PC-3 (cell line): ENCODE measurements at regions of chr12 and their contacts with region 1.

Region 1: DNA sequence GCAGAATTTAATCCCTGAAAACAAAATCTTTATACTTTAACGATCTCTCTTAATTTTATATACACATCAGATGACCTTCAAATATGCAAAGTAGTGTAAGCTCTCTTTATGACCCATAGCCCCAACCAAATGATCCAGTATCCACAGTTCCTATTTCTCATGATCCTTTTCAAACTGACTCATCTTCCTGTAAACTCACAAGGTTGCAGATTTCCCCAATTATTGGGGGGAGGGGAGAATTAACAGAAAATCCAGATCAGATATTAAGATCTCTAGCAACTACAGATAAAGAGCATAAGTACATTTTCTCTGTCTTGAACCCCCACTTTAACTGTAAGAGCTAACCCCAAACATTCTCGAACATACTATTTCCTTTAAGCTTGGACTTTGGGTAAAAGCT is 12.5 kb downstream of the GNS start:
- DNase-seq: peak; percentile 47
- ATAC-seq: peak; percentile 61
- H3K4me3 ChIP-seq: no peak overlapping the region
- H3K27ac ChIP-seq: peak overlapping the region; percentile 42
- H3K4me1 ChIP-seq: peaks cover 28% of the 10 kb centered on the region
- H3K27me3 ChIP-seq: no peaks in the 10 kb centered on the region
- CTCF ChIP-seq: no peak

Region 2: DNA sequence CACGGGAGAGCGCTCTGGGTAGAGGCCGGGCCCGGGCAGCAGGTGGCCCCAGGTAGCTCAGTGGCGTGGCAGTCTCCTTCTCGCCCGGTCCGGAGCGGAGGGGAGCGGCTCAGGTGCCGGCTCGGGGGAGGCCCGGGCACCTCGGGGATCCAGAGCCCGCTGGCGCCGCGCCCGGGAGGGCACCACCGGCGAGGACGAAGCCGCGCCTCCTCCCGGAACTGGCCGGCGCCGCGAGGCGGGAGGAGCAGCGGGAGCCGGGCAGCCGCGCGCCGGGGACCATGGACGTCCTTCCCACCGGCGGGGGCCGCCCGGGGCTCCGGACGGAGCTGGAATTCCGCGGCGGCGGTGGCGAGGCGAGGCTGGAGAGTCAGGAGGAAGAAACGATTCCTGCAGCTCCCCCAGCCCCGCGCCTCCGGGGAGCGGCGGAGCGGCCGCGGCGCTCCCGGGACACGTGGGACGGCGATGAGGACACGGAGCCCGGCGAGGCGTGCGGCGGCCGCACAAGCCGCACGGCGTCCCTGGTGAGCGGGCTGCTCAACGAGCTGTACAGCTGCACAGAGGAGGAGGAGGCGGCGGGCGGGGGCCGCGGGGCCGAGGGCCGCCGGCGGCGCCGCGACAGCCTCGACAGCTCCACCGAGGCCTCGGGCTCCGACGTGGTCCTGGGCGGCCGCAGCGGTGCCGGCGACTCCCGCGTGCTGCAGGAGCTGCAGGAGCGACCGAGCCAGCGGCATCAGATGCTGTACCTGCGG is 34.0 kb after region 1 on chr12:
- CTCF ChIA-PET with region 1: no interaction called
- POLR2A ChIA-PET with region 1: interaction called, 12 read pairs
- intact Hi-C with region 1: no loop called
- DNase-seq: peak; percentile 59
- ATAC-seq: peak; percentile 80
- H3K4me3 ChIP-seq: peak overlapping the region; percentile 89
- H3K27ac ChIP-seq: peak overlapping the region; percentile 15; the same call in 1 of the 2 replicates
- H3K4me1 ChIP-seq: peaks cover 17% of the 10 kb centered on the region
- H3K27me3 ChIP-seq: no peaks in the 10 kb centered on the region
- CTCF ChIP-seq: peak; percentile 7; the same call in 1 of the 2 replicates